ENCODE measurements at regions of chr22 and their contacts with region 1.

Region 1: GRCh38 chr22:28594797-28595462 is 84.7 kb downstream of the TTC28 start:
- DNase-seq: peak in 1 of 4 donors; percentile 5
- ATAC-seq: peak; percentile 92
- H3K4me3 ChIP-seq: no peak overlapping the region
- H3K27ac ChIP-seq: no peak overlapping the region
- H3K4me1 ChIP-seq: peaks cover 7% of the 10 kb centered on the region
- H3K27me3 ChIP-seq: no peaks in the 10 kb centered on the region
- CTCF ChIP-seq: peak; percentile 51 to 89 (median 84)
- POLR2A ChIP-seq: no peak

Region 2: DNA sequence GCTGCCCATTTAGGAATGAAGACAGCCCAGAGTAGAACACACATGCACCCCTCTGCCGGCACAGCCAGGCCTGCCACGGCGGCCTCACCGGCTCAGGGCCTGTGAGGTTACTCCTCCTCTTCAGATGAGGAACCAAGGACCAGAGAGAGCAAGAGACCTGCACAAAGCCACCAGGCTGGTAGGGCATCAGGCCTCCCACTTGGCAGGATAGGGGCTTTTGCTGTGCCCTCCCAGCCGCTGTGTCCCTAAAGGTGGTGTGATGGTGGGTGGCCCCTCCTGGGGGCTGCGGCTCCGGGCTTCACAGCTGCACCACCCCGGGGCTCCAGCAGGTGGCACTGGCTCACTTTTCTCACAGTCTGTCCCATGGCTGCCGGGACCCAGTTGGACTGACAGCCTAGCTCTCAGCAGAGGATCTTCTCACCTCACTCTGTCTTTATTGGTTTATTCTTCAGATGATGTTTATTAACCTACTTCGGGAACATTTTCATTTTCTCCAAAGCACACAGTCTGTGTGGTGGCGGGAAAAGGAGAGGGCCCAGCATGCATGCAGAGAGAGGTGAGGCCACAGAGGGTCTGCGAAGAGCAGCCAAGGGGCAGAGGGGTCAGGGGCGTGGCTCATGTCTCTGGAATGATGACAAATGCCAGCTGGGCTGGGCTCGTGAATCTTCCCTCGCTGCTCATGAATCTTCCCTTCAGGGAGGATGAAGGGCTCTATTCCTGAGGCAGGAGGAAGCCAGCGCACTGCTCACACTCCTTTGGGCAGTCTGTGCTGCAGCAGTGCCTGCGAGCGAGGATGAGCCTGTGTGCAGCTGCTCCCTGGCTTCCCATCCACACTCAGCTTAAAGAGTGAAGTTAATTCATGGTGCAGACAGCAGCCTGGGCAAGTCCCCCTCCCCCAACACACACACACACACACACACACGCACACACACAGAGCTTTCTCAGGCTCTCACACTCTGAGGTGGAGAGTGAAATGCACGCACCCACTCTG is 574.8 kb before region 1 on chr22:
- intact Hi-C with region 1: loop called (anchors 10 kb)
- DNase-seq: peak; percentile 66 to 79 (median 72)
- ATAC-seq: peak; percentile 81
- H3K4me3 ChIP-seq: no peak overlapping the region
- H3K27ac ChIP-seq: no peak overlapping the region
- H3K4me1 ChIP-seq: no peaks in the 10 kb centered on the region
- H3K27me3 ChIP-seq: no peaks in the 10 kb centered on the region
- CTCF ChIP-seq: peak; percentile 69 to 94 (median 84)
- POLR2A ChIP-seq: no peak

Region 3: GRCh38 chr22:28051787-28052356 is 543.1 kb before region 1 on chr22:
- intact Hi-C with region 1: loop called (anchors 10 kb)
- DNase-seq: peak; percentile 71 to 83 (median 76)
- ATAC-seq: peak; percentile 68
- H3K4me3 ChIP-seq: no peak overlapping the region
- H3K27ac ChIP-seq: no peak overlapping the region
- H3K4me1 ChIP-seq: no peaks in the 10 kb centered on the region
- H3K27me3 ChIP-seq: no peaks in the 10 kb centered on the region
- CTCF ChIP-seq: peak; percentile 76 to 86 (median 78)
- POLR2A ChIP-seq: no peak